Caco-2 (cell line): ENCODE measurements at regions of chr5 and their contacts with region 1.

Region 1: GRCh38 chr5:139262742-139263445 is 30.6 kb upstream of the MATR3 start:
- DNase-seq: peak; percentile 88 to 90
- H3K4me3 ChIP-seq: no peak overlapping the region
- H3K4me3 Mint-ChIP-seq: no peak overlapping the region
- H3K27ac Mint-ChIP-seq: no peak overlapping the region
- H3K4me1 ChIP-seq: peaks cover 12% of the 10 kb centered on the region; the same call in 1 of the 2 replicates
- H3K4me1 Mint-ChIP-seq: peaks cover 15% of the 10 kb centered on the region
- H3K27me3 ChIP-seq: no peaks in the 10 kb centered on the region
- H3K27me3 Mint-ChIP-seq: no peaks in the 10 kb centered on the region
- CTCF ChIP-seq: peak; percentile 75 to 93

Region 2: GRCh38 chr5:138641547-138642298 is 621.2 kb before region 1 on chr5:
- CTCF ChIA-PET with region 1: no interaction called
- POLR2A ChIA-PET with region 1: no interaction called
- intact Hi-C with region 1: loop called (anchors 1 kb)
- DNase-seq: peak; percentile 78 to 83
- H3K4me3 ChIP-seq: no peak overlapping the region
- H3K4me3 Mint-ChIP-seq: no peak overlapping the region
- H3K27ac Mint-ChIP-seq: no peak overlapping the region
- H3K4me1 ChIP-seq: no peaks in the 10 kb centered on the region
- H3K4me1 Mint-ChIP-seq: no peaks in the 10 kb centered on the region
- H3K27me3 ChIP-seq: no peaks in the 10 kb centered on the region
- H3K27me3 Mint-ChIP-seq: no peaks in the 10 kb centered on the region
- CTCF ChIP-seq: peak; percentile 77 to 84

Region 3: DNA sequence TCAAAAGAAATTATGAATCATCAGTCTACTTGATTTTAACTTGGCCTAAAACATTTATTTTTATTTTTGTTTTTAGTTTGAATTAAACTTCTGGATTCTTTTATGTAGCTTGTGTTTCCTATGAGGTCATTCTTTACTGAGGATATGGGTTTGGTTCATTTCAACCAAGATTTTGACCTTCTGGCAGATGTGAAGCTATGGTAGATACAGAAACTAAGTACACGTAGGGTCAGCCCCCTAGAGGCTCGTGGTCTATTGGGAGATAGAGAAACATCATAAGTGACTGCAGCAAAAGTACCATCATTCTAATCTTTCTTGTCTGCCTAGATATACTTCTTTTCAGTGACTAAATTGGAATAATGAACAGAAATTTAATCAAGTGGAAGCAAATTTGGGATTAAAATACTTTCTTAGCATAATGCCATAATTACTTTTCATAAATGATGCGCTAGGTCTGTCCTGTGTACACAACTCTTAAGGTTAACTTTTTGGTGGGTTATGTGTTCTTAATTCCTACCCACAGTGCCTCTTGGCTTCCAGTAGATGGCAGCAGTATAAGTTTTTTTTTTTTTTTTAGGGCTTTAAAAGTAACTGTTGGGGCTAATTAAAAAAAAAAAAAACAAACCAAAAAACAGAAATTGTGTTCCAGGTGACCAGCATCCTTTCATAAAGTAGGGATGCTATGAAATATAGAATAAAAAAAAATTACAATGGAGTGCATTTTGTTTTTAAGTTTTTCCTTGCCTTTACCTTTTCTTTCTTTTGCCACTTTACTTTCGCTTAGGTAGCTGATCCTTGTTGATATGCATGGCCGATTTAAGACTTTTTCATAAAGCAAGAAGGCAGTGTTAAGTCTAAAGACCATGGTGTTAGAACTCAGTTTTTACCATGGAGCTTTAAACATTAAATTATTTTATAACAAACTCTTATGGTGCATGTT is 437.7 kb before region 1 on chr5:
- CTCF ChIA-PET with region 1: interaction called, 4 read pairs
- POLR2A ChIA-PET with region 1: no interaction called
- intact Hi-C with region 1: loop called (anchors 5 kb)
- DNase-seq: no peak
- H3K4me3 ChIP-seq: no peak overlapping the region
- H3K4me3 Mint-ChIP-seq: no peak overlapping the region
- H3K27ac Mint-ChIP-seq: no peak overlapping the region
- H3K4me1 ChIP-seq: peaks cover 8% of the 10 kb centered on the region
- H3K4me1 Mint-ChIP-seq: peaks cover 20% of the 10 kb centered on the region
- H3K27me3 ChIP-seq: no peaks in the 10 kb centered on the region
- H3K27me3 Mint-ChIP-seq: no peaks in the 10 kb centered on the region
- CTCF ChIP-seq: peak; percentile 53 to 72

Region 4: GRCh38 chr5:138967791-138968448 is 295.0 kb before region 1 on chr5:
- CTCF ChIA-PET with region 1: no interaction called
- POLR2A ChIA-PET with region 1: no interaction called
- intact Hi-C with region 1: loop called (anchors 10 kb)
- DNase-seq: no peak
- H3K4me3 ChIP-seq: no peak overlapping the region
- H3K4me3 Mint-ChIP-seq: no peak overlapping the region
- H3K27ac Mint-ChIP-seq: no peak overlapping the region
- H3K4me1 ChIP-seq: peaks cover 23% of the 10 kb centered on the region
- H3K4me1 Mint-ChIP-seq: peaks cover 11% of the 10 kb centered on the region
- H3K27me3 ChIP-seq: no peaks in the 10 kb centered on the region
- H3K27me3 Mint-ChIP-seq: no peaks in the 10 kb centered on the region
- CTCF ChIP-seq: no peak

Region 5: GRCh38 chr5:139091439-139092156 is 171.3 kb before region 1 on chr5:
- CTCF ChIA-PET with region 1: interaction called, 7 read pairs
- POLR2A ChIA-PET with region 1: no interaction called
- intact Hi-C with region 1: loop called (anchors 1 kb)
- DNase-seq: peak in 1 of 2 experiments; percentile 46
- H3K4me3 ChIP-seq: no peak overlapping the region
- H3K4me3 Mint-ChIP-seq: no peak overlapping the region
- H3K27ac Mint-ChIP-seq: no peak overlapping the region
- H3K4me1 ChIP-seq: no peaks in the 10 kb centered on the region
- H3K4me1 Mint-ChIP-seq: no peaks in the 10 kb centered on the region
- H3K27me3 ChIP-seq: no peaks in the 10 kb centered on the region
- H3K27me3 Mint-ChIP-seq: no peaks in the 10 kb centered on the region
- CTCF ChIP-seq: peak in 1 of 2 experiments; percentile 48

Region 6: GRCh38 chr5:139468421-139468931 is 205.6 kb after region 1 on chr5:
- CTCF ChIA-PET with region 1: no interaction called
- POLR2A ChIA-PET with region 1: no interaction called
- intact Hi-C with region 1: no loop called
- DNase-seq: peak; percentile 47 to 63
- H3K4me3 ChIP-seq: no peak overlapping the region
- H3K4me3 Mint-ChIP-seq: no peak overlapping the region
- H3K27ac Mint-ChIP-seq: no peak overlapping the region
- H3K4me1 ChIP-seq: 0 out of 2 replicates have a peak, but pooled peaks cover 3% of the 10 kb centered on the region
- H3K4me1 Mint-ChIP-seq: no peaks in the 10 kb centered on the region
- H3K27me3 ChIP-seq: no peaks in the 10 kb centered on the region
- H3K27me3 Mint-ChIP-seq: no peaks in the 10 kb centered on the region
- CTCF ChIP-seq: peak in 1 of 2 experiments; percentile 24